GM12878 (cell line): ENCODE measurements at regions of chr19 and their contacts with region 1.

Region 1: DNA sequence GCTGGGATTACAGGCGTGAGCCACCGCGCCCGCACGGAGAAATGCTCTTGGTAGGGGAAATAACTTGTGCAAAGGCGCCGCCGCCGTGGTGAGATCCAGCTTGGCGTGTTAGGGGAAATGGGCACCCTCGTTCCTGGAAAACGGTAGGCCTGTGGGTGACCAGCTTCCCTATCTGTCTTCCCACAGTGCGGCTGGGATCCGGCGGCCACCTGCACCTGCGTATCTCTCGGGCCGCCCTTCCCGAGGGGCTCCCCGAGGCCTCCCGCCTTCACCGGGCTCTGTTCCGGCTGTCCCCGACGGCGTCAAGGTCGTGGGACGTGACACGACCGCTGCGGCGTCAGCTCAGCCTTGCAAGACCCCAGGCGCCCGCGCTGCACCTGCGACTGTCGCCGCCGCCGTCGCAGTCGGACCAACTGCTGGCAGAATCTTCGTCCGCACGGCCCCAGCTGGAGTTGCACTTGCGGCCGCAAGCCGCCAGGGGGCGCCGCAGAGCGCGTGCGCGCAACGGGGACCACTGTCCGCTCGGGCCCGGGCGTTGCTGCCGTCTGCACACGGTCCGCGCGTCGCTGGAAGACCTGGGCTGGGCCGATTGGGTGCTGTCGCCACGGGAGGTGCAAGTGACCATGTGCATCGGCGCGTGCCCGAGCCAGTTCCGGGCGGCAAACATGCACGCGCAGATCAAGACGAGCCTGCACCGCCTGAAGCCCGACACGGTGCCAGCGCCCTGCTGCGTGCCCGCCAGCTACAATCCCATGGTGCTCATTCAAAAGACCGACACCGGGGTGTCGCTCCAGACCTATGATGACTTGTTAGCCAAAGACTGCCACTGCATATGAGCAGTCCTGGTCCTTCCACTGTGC is 2.4 kb downstream of the GDF15 start:
- DNase-seq: peak; percentile 60
- ATAC-seq: peak; percentile 94
- H3K4me3 ChIP-seq: peak overlapping the region; percentile 50; the same call in 1 of the 2 replicates
- H3K27ac ChIP-seq: no peak overlapping the region
- H3K4me1 ChIP-seq: peaks cover 16% of the 10 kb centered on the region
- H3K27me3 ChIP-seq: peaks cover 0 to 3% of the 10 kb centered on the region in 2 experiments; a peak in 3 of 4 replicates
- CTCF ChIP-seq: peak; percentile 98; a peak in 5 of 6 replicates
- EP300 ChIP-seq: no peak
- POLR2A ChIP-seq: peak; percentile 73
- RAD21 ChIP-seq: peak; percentile 72

Region 2: GRCh38 chr19:18340190-18340989 is 47.9 kb before region 1 on chr19 and contains the start of gene PGPEP1:
- CTCF ChIA-PET with region 1: interaction called, 18 read pairs
- POLR2A ChIA-PET with region 1: interaction called, 8 read pairs
- RAD21 ChIA-PET with region 1: interaction called, 3 read pairs
- SMC1A ChIA-PET with region 1: interaction called, 4 read pairs
- in situ Hi-C with region 1: no loop called
- intact Hi-C with region 1: no loop called
- DNase-seq: no peak
- ATAC-seq: peak; percentile 86
- H3K4me3 ChIP-seq: peak within 1 kb of the TSS; percentile 79
- H3K27ac ChIP-seq: peak within 1 kb of the TSS; percentile 58
- H3K4me1 ChIP-seq: peaks cover 14% of the 10 kb centered on the region
- H3K27me3 ChIP-seq: no peaks in the 10 kb centered on the region
- CTCF ChIP-seq: no peak
- EP300 ChIP-seq: no peak
- POLR2A ChIP-seq: peak; percentile 70; the same call in 1 of the 2 replicates
- RAD21 ChIP-seq: no peak
- polyA plus RNA-seq, gene PGPEP1: 13.8 to 13.9 TPM

Region 3: DNA sequence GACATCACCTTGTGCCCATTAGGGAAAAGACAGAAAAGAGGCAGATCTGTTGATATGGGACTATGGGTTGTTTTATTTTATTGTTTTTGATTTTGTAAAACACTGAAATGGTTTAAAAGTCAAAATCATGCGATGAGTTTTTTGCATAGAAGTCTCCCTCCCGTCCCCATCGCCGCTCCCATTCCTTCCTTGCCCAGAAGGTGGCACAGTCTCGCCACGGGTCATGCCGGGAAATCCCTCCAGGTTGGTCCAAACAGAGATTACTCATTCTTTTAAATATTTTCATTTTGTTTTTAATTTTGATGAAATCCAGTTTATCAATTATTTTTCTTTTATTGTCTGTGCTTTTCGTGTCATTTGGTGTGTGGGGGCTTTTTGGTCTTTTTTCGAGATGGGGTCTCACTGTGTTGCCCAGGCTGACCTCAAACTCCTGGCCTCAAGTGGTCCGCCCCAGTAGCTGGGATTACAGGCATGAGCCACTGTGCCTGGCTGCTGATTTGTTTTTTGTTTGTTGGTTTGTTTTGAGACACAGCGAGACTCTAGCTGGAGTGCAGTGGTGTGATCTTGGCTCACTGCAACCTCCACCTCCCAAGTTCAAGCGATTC is 38.7 kb before region 1 on chr19:
- CTCF ChIA-PET with region 1: interaction called, 45 read pairs
- POLR2A ChIA-PET with region 1: no interaction called
- RAD21 ChIA-PET with region 1: interaction called, 3 read pairs
- SMC1A ChIA-PET with region 1: interaction called, 15 read pairs
- in situ Hi-C with region 1: no loop called
- intact Hi-C with region 1: no loop called
- DNase-seq: no peak
- ATAC-seq: peak; percentile 80
- H3K4me3 ChIP-seq: no peak overlapping the region
- H3K27ac ChIP-seq: no peak overlapping the region
- H3K4me1 ChIP-seq: no peaks in the 10 kb centered on the region
- H3K27me3 ChIP-seq: no peaks in the 10 kb centered on the region
- CTCF ChIP-seq: peak; percentile 74 to 93 (median 80)
- EP300 ChIP-seq: no peak
- POLR2A ChIP-seq: no peak
- RAD21 ChIP-seq: peak; percentile 88

Region 4: DNA sequence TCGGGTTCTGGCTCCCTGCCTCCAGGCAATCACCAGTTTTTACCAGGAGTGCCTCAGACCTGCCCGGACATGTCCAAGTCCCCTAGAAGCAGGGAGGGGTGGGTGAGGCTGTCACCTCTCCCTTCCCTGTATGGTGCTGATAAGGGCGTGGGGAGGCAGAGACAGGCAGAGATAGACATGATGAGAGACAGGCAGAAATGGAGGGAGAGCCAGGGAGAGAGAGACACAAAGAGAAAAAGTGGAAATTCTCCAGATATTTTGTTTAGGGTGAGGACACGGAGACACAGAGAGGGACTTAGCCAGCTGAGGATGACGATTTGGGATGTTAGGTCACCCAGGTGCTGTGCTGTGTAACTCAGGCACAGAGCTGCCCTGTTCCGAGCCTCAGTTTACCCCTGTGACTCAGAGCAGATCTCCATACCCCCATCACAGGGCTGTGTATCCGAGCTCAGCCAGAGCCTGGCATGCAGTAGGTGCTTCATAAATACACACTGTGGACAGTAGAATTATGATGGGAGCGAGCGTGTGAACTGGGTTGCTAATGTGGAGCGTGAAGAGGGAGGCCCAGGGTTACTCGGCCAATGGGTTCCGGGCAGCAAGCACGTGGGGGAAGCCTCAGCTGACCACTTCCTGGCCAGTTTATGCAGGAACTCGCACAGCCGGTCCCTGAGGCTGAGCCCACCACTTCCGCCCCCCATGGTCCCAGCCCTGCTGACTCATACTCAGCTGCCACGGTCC is 14.3 kb before region 1 on chr19:
- CTCF ChIA-PET with region 1: interaction called, 11 read pairs
- POLR2A ChIA-PET with region 1: interaction called, 15 read pairs
- RAD21 ChIA-PET with region 1: interaction called, 7 read pairs
- SMC1A ChIA-PET with region 1: interaction called, 4 read pairs
- in situ Hi-C with region 1: no loop called
- intact Hi-C with region 1: no loop called
- DNase-seq: peak; percentile 91
- ATAC-seq: peak; percentile 98
- H3K4me3 ChIP-seq: 0 out of 2 replicates have a peak overlapping the region, but pooled peaks have one; percentile 29
- H3K27ac ChIP-seq: peak overlapping the region; percentile 95
- H3K4me1 ChIP-seq: peaks cover 41% of the 10 kb centered on the region
- H3K27me3 ChIP-seq: no peaks in the 10 kb centered on the region
- CTCF ChIP-seq: no peak
- EP300 ChIP-seq: peak; percentile 72 to 88
- POLR2A ChIP-seq: peak; percentile 77; the same call in 1 of the 2 replicates
- RAD21 ChIP-seq: no peak

Region 5: GRCh38 chr19:18401580-18402112 is 13.3 kb after region 1 on chr19:
- CTCF ChIA-PET with region 1: interaction called, 144 read pairs
- POLR2A ChIA-PET with region 1: interaction called, 6 read pairs
- RAD21 ChIA-PET with region 1: interaction called, 9 read pairs
- SMC1A ChIA-PET with region 1: interaction called, 10 read pairs
- in situ Hi-C with region 1: no loop called
- intact Hi-C with region 1: no loop called
- DNase-seq: no peak
- ATAC-seq: peak; percentile 83
- H3K4me3 ChIP-seq: no peak overlapping the region
- H3K27ac ChIP-seq: peak overlapping the region; percentile 33
- H3K4me1 ChIP-seq: peaks cover 23% of the 10 kb centered on the region
- H3K27me3 ChIP-seq: no peaks in the 10 kb centered on the region
- CTCF ChIP-seq: peak; percentile 41 to 50 (median 41); a peak in 4 of 6 replicates
- EP300 ChIP-seq: no peak; a peak in 1 of 4 replicates
- POLR2A ChIP-seq: peak; percentile 51; the same call in 1 of the 2 replicates
- RAD21 ChIP-seq: peak; percentile 46

Region 6: GRCh38 chr19:18408053-18408476 is 19.7 kb after region 1 on chr19:
- CTCF ChIA-PET with region 1: interaction called, 144 read pairs
- POLR2A ChIA-PET with region 1: interaction called, 4 read pairs
- RAD21 ChIA-PET with region 1: interaction called, 63 read pairs
- SMC1A ChIA-PET with region 1: interaction called, 60 read pairs
- in situ Hi-C with region 1: no loop called
- intact Hi-C with region 1: loop called (anchors 1 kb)
- DNase-seq: peak; percentile 87
- ATAC-seq: peak; percentile 95
- H3K4me3 ChIP-seq: no peak overlapping the region
- H3K27ac ChIP-seq: peak overlapping the region; percentile 37
- H3K4me1 ChIP-seq: peaks cover 14% of the 10 kb centered on the region
- H3K27me3 ChIP-seq: no peaks in the 10 kb centered on the region
- CTCF ChIP-seq: peak; percentile 56 to 60 (median 59)
- EP300 ChIP-seq: peak; percentile 73 to 82; a peak in 3 of 4 replicates
- POLR2A ChIP-seq: peak; percentile 68
- RAD21 ChIP-seq: peak; percentile 60

Region 7: GRCh38 chr19:18419195-18419698 is 30.9 kb after region 1 on chr19 and contains the start of gene SSBP4:
- CTCF ChIA-PET with region 1: interaction called, 22 read pairs
- POLR2A ChIA-PET with region 1: interaction called, 9 read pairs
- RAD21 ChIA-PET with region 1: interaction called, 63 read pairs
- SMC1A ChIA-PET with region 1: interaction called, 60 read pairs
- in situ Hi-C with region 1: no loop called
- intact Hi-C with region 1: no loop called
- DNase-seq: no peak
- ATAC-seq: peak; percentile 37
- H3K4me3 ChIP-seq: peak within 1 kb of the TSS; percentile 87
- H3K27ac ChIP-seq: peak within 1 kb of the TSS; percentile 72
- H3K4me1 ChIP-seq: peaks cover 70% of the 10 kb centered on the region
- H3K27me3 ChIP-seq: no peaks in the 10 kb centered on the region
- CTCF ChIP-seq: peak in 2 of 3 experiments; percentile 14 to 34; a peak in 2 of 6 replicates
- EP300 ChIP-seq: peak in 1 of 2 experiments; percentile 36; a peak in 1 of 4 replicates
- POLR2A ChIP-seq: no peak
- RAD21 ChIP-seq: no peak
- polyA plus RNA-seq, gene SSBP4: 0.37 to 6.6 TPM